Activated CD4-positive, alpha-beta memory T cell treated with anti-CD3 and anti-CD28 coated beads for 36 hours (primary cell): ENCODE measurements at regions of chr5 and their contacts with region 1.

Region 1: GRCh38 chr5:134758504-134759341 is at the start of gene DDX46:
- DNase-seq: peak; percentile 97
- H3K4me3 Mint-ChIP-seq: peak within 1 kb of the TSS; percentile 100
- H3K27ac Mint-ChIP-seq: peak within 1 kb of the TSS; percentile 87
- H3K4me1 Mint-ChIP-seq: peaks cover 34% of the 10 kb centered on the region
- H3K27me3 Mint-ChIP-seq: no peaks in the 10 kb centered on the region
- total RNA-seq, gene DDX46: 67.4 to 68.0 TPM

Region 2: GRCh38 chr5:134603059-134603458 is 155.7 kb before region 1 on chr5:
- CTCF ChIA-PET with region 1: no interaction called
- POLR2A ChIA-PET with region 1: no interaction called
- intact Hi-C with region 1: no loop called
- DNase-seq: no peak
- H3K4me3 Mint-ChIP-seq: no peak overlapping the region
- H3K27ac Mint-ChIP-seq: peak overlapping the region; percentile 45
- H3K4me1 Mint-ChIP-seq: peaks cover 58% of the 10 kb centered on the region
- H3K27me3 Mint-ChIP-seq: no peaks in the 10 kb centered on the region

Region 3: GRCh38 chr5:134825212-134825611 is 66.5 kb after region 1 on chr5:
- CTCF ChIA-PET with region 1: no interaction called
- POLR2A ChIA-PET with region 1: no interaction called
- intact Hi-C with region 1: no loop called
- DNase-seq: no peak
- H3K4me3 Mint-ChIP-seq: no peak overlapping the region
- H3K27ac Mint-ChIP-seq: no peak overlapping the region
- H3K4me1 Mint-ChIP-seq: no peaks in the 10 kb centered on the region
- H3K27me3 Mint-ChIP-seq: no peaks in the 10 kb centered on the region

Region 4: DNA sequence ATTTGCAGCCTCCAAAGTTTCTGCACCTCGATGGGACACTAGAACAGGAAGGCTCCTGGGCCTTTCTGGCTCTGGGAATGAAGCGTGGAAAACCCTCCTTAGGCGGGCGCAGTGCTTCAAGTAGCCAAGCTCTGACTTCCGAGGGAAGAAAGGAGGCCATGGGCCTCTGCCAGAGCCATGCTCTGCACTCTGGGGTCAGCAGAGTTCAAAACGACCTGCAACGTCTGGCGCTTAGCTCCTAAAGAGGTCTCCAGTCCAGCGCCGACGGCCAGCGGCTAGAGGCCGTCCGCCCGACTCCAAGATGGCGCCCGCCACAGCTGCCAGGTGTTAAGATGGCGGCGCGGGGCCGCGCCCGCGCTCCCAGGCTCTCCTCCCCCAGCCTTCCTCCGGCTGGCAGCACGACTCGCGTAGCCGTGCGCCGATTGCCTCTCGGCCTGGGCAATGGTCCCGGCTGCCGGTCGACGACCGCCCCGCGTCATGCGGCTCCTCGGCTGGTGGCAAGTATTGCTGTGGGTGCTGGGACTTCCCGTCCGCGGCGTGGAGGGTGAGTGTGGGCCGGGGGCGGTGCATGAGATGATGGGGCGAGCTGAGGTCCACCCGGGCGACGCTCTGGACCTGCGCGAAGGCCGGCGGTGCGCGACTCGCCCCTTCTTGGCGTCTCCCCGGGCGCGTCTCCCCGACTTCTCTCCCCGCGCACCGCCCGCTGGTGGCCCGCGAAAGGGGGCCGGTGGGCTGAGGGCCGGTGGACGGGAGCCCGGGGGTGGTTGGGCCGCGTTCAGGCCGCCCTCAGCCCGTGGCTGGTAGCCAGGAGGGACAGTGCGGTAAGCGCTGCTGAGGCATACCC is 115.5 kb after region 1 on chr5 and contains the start of gene TXNDC15:
- CTCF ChIA-PET with region 1: no interaction called
- POLR2A ChIA-PET with region 1: no interaction called
- intact Hi-C with region 1: loop called (anchors 1 kb)
- DNase-seq: peak; percentile 89
- H3K4me3 Mint-ChIP-seq: peak within 1 kb of the TSS; percentile 95
- H3K27ac Mint-ChIP-seq: peak within 1 kb of the TSS; percentile 94
- H3K4me1 Mint-ChIP-seq: peaks cover 36% of the 10 kb centered on the region
- H3K27me3 Mint-ChIP-seq: no peaks in the 10 kb centered on the region
- total RNA-seq, gene TXNDC15: 29.6 to 30.9 TPM